CD8-positive, alpha-beta T cell (primary cell): ENCODE measurements at regions of chr9 and their contacts with region 1.

Region 1: GRCh38 chr9:122092611-122093506 is at the start of gene TTLL11:
- DNase-seq: peak; percentile 93 to 97 (median 97)
- ATAC-seq: peak; percentile 94
- H3K4me3 ChIP-seq: peak within 1 kb of the TSS; percentile 51 to 77
- H3K4me3 Mint-ChIP-seq: peak within 1 kb of the TSS; percentile 92
- H3K27ac ChIP-seq: peak within 1 kb of the TSS in 1 of 2 experiments; percentile 36
- H3K27ac Mint-ChIP-seq: peak within 1 kb of the TSS; percentile 58
- H3K4me1 ChIP-seq: peaks cover 24% of the 10 kb centered on the region
- H3K4me1 Mint-ChIP-seq: peaks cover 52% of the 10 kb centered on the region
- H3K27me3 ChIP-seq: no peaks in the 10 kb centered on the region
- H3K27me3 Mint-ChIP-seq: no peaks in the 10 kb centered on the region
- CTCF ChIP-seq: no peak
- total RNA-seq, gene TTLL11: 0.68 to 1.00 TPM

Region 2: GRCh38 chr9:120714088-120714845 is 1378.6 kb before region 1 on chr9 and contains the start of gene MEGF9:
- CTCF ChIA-PET with region 1: no interaction called
- POLR2A ChIA-PET with region 1: no interaction called
- intact Hi-C with region 1: loop called in 1 of 2 experiments (anchors 10 kb)
- DNase-seq: peak; percentile 89 to 98 (median 96)
- ATAC-seq: peak; percentile 94
- H3K4me3 ChIP-seq: peak within 1 kb of the TSS; percentile 69 to 92
- H3K4me3 Mint-ChIP-seq: peak within 1 kb of the TSS; percentile 83
- H3K27ac ChIP-seq: peak within 1 kb of the TSS; percentile 61 to 64
- H3K27ac Mint-ChIP-seq: peak within 1 kb of the TSS; percentile 86
- H3K4me1 ChIP-seq: peaks cover 38% of the 10 kb centered on the region
- H3K4me1 Mint-ChIP-seq: peaks cover 35% of the 10 kb centered on the region
- H3K27me3 ChIP-seq: no peaks in the 10 kb centered on the region
- H3K27me3 Mint-ChIP-seq: no peaks in the 10 kb centered on the region
- CTCF ChIP-seq: no peak
- total RNA-seq, gene MEGF9: 3.0 to 3.1 TPM

Region 3: DNA sequence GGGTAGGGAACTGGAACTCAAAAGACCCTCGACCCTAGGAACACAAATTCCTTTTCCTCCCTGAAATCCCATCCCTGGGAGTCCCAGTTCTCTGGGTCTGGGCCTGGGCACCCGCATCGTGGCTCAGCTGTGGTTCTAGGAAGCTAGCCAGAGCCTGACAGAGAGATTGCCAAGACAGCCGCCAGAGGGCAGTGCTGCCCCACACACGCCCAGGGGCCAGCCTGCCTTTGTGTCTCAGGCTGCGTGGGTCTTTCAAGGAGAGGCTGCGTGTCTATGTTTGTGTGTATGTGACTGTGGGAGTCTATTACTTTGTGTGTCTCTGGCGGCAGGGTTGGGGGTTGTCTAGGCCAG is 32.3 kb after region 1 on chr9:
- CTCF ChIA-PET with region 1: interaction called, 177 read pairs
- POLR2A ChIA-PET with region 1: no interaction called
- intact Hi-C with region 1: no loop called
- DNase-seq: peak; percentile 62 to 87 (median 76)
- ATAC-seq: peak; percentile 83
- H3K4me3 ChIP-seq: no peak overlapping the region
- H3K4me3 Mint-ChIP-seq: peak overlapping the region; percentile 33
- H3K27ac ChIP-seq: no peak overlapping the region
- H3K27ac Mint-ChIP-seq: no peak overlapping the region
- H3K4me1 ChIP-seq: peaks cover 18% of the 10 kb centered on the region
- H3K4me1 Mint-ChIP-seq: peaks cover 21% of the 10 kb centered on the region
- H3K27me3 ChIP-seq: peaks cover 12 to 16% of the 10 kb centered on the region in 2 experiments
- H3K27me3 Mint-ChIP-seq: peaks cover 31% of the 10 kb centered on the region
- CTCF ChIP-seq: peak; percentile 82

Region 4: GRCh38 chr9:122264360-122265148 is 171.7 kb after region 1 on chr9 and contains the starts of genes MRRF and RBM18:
- CTCF ChIA-PET with region 1: interaction called, 10 read pairs
- POLR2A ChIA-PET with region 1: interaction called, 4 read pairs
- intact Hi-C with region 1: loop called (anchors 1 kb)
- DNase-seq: peak; percentile 80 to 95 (median 87)
- ATAC-seq: peak; percentile 84
- H3K4me3 ChIP-seq: peak within 1 kb of the TSS; percentile 79 to 91
- H3K4me3 Mint-ChIP-seq: peak within 1 kb of the TSS; percentile 95
- H3K27ac ChIP-seq: peak within 1 kb of the TSS; percentile 95 to 99
- H3K27ac Mint-ChIP-seq: peak within 1 kb of the TSS; percentile 98
- H3K4me1 ChIP-seq: peaks cover 38% of the 10 kb centered on the region
- H3K4me1 Mint-ChIP-seq: peaks cover 60% of the 10 kb centered on the region
- H3K27me3 ChIP-seq: no peaks in the 10 kb centered on the region
- H3K27me3 Mint-ChIP-seq: no peaks in the 10 kb centered on the region
- CTCF ChIP-seq: no peak
- total RNA-seq, gene MRRF: 22.9 to 23.2 TPM
- total RNA-seq, gene RBM18: 34.0 to 38.9 TPM

Region 5: DNA sequence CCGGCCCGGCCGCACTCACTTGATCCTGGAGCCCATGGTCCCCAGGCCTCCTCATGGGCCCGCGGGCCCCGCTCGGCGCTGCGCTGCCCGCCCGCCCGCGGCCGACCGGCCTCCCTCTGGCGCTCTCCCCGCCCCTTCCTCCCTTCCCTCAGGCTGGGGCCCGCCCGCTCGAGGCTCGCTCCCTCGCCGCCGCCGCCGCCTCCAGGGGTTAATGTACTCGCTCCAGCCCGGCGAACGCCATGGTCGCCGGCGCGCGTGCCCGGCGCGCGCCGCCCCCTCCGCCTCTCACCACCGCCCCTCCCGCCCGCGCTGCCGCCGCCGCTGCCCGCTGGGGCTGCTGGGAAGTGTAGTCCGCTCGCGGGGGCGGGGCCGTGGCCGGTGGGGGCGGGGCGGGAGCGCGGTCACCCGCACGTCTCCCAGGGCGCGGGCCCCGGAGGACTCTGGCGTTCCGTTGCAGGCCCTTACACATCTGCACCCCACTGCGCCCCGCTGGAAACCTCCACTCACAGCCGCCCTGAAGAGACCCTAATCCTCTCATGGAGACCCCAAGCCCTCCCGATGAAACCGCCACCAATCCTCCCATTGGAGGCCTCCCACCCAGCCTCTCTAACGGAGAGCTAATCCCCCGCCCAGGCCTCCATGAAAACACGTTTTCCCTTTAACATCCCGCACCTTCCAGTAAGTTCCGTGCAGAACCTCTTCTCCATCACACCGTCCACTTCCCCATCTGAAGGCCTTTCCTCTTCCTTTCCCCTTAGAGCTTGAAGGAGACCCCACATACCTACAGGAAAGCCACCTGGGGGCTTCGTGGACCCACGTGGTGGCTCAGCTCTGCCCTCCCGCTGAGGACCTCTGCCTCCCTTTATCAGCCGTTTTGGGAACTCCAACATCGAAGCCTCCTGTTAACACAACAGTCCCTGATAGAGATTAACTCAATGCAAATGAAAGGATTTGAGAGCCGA is 1837.3 kb after region 1 on chr9 and contains the start of gene DENND1A:
- CTCF ChIA-PET with region 1: no interaction called
- POLR2A ChIA-PET with region 1: no interaction called
- intact Hi-C with region 1: loop called in 1 of 2 experiments (anchors 5 kb)
- DNase-seq: peak; percentile 74 to 92 (median 85)
- ATAC-seq: peak; percentile 94
- H3K4me3 ChIP-seq: peak within 1 kb of the TSS; percentile 58 to 66
- H3K4me3 Mint-ChIP-seq: peak within 1 kb of the TSS; percentile 90
- H3K27ac ChIP-seq: no peak within 1 kb of the TSS
- H3K27ac Mint-ChIP-seq: peak within 1 kb of the TSS; percentile 75
- H3K4me1 ChIP-seq: peaks cover 22% of the 10 kb centered on the region
- H3K4me1 Mint-ChIP-seq: peaks cover 42% of the 10 kb centered on the region
- H3K27me3 ChIP-seq: no peaks in the 10 kb centered on the region
- H3K27me3 Mint-ChIP-seq: no peaks in the 10 kb centered on the region
- CTCF ChIP-seq: no peak
- total RNA-seq, gene DENND1A: 17.5 to 18.7 TPM